OCI-LY7 (cell line): ENCODE measurements at regions of chr3 and their contacts with region 1.

Region 1: GRCh38 chr3:187714404-187714979 is 12.1 kb upstream of the RTP2 start:
- DNase-seq: peak; percentile 82
- H3K4me3 ChIP-seq: no peak overlapping the region
- H3K27ac ChIP-seq: no peak overlapping the region
- H3K4me1 ChIP-seq: peaks cover 13% of the 10 kb centered on the region
- CTCF ChIP-seq: peak; percentile 98

Region 2: GRCh38 chr3:187319699-187320302 is 394.7 kb before region 1 on chr3:
- CTCF ChIA-PET with region 1: no interaction called
- POLR2A ChIA-PET with region 1: interaction called, 4 read pairs
- intact Hi-C with region 1: loop called (anchors 1 kb)
- DNase-seq: peak; percentile 60
- H3K4me3 ChIP-seq: no peak overlapping the region
- H3K27ac ChIP-seq: no peak overlapping the region
- H3K4me1 ChIP-seq: no peaks in the 10 kb centered on the region
- CTCF ChIP-seq: peak; percentile 80

Region 3: DNA sequence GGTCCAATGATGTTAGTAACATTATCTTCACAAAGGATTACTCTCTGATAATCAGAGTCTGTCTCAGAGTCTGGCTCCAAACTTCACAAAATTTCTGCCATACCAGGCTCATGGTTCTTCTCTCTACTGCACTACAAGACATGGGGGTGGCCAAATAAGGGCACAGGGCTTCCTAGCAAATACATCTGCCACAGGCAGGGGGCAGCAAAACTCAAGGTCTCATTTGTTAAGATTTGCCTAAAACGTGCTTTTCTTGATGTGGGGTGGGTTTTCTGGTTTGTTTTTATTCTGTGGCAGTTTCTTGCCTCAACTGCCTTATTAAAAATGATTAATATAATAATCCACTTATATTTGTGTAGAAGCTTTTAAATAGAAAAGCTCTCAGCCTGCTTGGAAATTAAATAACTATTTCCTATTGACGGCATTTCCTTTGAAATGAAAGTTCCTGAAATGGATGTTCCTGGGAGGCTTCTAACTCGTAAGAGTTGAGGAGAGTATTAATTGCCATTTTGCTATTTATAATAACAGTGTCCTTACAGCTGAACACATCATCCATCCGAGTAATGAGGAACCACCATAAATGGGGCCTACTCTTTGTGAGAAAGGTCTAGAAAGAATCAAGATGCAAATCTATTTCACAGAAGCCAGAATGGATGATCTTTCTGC is 98.1 kb before region 1 on chr3:
- CTCF ChIA-PET with region 1: no interaction called
- POLR2A ChIA-PET with region 1: no interaction called
- intact Hi-C with region 1: loop called (anchors 1 kb)
- DNase-seq: peak; percentile 59
- H3K4me3 ChIP-seq: no peak overlapping the region
- H3K27ac ChIP-seq: no peak overlapping the region
- H3K4me1 ChIP-seq: no peaks in the 10 kb centered on the region
- CTCF ChIP-seq: peak; percentile 92